A549 (cell line): ENCODE measurements at regions of chr21 and their contacts with region 1.

Region 1: GRCh38 chr21:33924079-33924765 is 8.6 kb upstream of the ATP5PO start:
- DNase-seq: peak; percentile 48 to 76
- ATAC-seq: peak; percentile 98
- H3K4me3 ChIP-seq: no peak overlapping the region
- H3K27ac ChIP-seq: peak overlapping the region; percentile 39 to 67; a peak in 3 of 6 replicates
- H3K4me1 ChIP-seq: peaks cover 5% of the 10 kb centered on the region; the same call in 1 of the 3 replicates
- CTCF ChIP-seq: peak; percentile 73
- EP300 ChIP-seq: no peak
- POLR2A ChIP-seq: no peak
- RAD21 ChIP-seq: peak; percentile 94

Region 2: DNA sequence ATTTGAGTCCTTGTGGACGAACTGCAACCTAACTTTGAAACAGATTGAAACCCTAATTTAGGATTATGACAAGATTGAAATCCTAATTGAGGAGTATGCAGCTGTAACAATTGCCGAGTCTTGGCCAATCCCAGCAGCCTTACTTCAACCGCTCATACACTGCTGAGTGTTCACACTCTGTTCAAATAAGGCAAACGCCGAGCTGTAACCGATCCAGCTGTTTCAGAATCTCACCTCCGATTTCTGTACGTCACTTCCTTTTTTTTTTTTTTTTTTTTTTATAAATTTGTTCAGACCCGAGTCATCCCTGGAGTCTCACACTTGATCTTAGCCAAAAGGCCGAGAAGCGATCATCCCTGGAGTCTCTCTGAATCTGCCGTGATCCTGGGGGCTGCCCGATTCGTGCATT is 13.7 kb after region 1 on chr21:
- CTCF ChIA-PET with region 1: interaction called, 42 read pairs
- POLR2A ChIA-PET with region 1: no interaction called
- DNase-seq: no peak
- ATAC-seq: no peak
- H3K4me3 ChIP-seq: no peak overlapping the region
- H3K27ac ChIP-seq: no peak overlapping the region
- H3K4me1 ChIP-seq: no peaks in the 10 kb centered on the region
- CTCF ChIP-seq: no peak
- EP300 ChIP-seq: no peak
- POLR2A ChIP-seq: no peak
- RAD21 ChIP-seq: no peak

Region 3: DNA sequence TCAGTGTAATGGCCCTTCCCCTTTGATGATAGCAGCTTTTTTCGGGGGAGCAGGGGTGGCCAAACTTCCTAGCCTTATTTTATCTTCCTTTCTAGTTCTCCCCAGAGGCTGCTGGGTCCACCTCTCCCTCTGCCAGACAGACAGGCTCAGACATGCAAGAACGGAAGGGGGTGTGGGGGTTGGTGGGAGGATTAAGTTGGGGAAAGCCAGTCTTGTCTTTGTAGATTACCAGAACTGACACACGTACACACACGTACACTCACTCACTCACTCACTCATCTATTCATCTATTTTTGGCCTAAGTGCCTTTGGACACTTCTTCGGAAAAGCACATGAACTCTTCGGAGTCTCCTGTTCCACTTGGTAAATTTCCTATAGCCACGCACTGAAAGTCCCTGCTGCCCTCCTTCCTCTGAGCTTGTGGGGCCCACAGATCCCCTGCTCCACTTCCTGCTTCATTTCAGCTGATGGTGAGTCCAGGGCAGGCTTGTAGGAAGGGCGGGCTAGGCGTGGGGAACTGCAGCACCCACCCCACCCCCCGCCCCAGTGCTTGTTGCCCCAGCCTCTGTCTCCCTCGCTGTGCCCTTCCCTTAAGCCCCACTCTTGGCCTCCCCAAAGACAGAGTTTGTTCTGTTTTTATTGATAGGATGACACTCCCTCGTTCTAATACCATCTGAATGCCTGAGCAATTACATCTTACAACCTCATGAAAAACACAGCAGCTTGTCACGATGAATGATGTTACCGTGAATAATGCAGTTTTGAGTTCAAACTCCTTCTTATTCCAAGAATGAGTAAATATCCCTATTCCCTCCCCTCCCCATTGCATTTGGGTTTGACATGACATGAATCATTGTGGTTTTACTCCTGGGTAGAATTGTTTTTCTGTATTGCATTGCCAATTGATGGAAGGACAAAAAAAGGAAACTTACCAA is 52.1 kb after region 1 on chr21:
- CTCF ChIA-PET with region 1: interaction called, 20 read pairs
- POLR2A ChIA-PET with region 1: no interaction called
- DNase-seq: peak; percentile 15 to 67
- ATAC-seq: peak; percentile 72 to 78
- H3K4me3 ChIP-seq: no peak overlapping the region
- H3K27ac ChIP-seq: peak overlapping the region; percentile 66 to 84
- H3K4me1 ChIP-seq: peaks cover 33% of the 10 kb centered on the region
- CTCF ChIP-seq: no peak
- EP300 ChIP-seq: no peak
- POLR2A ChIP-seq: no peak
- RAD21 ChIP-seq: no peak

Region 4: GRCh38 chr21:34073032-34073869 is 149.0 kb after region 1 on chr21 and contains the starts of genes MRPS6 and SLC5A3:
- CTCF ChIA-PET with region 1: interaction called, 20 read pairs
- POLR2A ChIA-PET with region 1: interaction called, 11 read pairs
- DNase-seq: peak; percentile 13 to 78
- ATAC-seq: peak; percentile 89 to 90
- H3K4me3 ChIP-seq: peak within 1 kb of the TSS; percentile 98
- H3K27ac ChIP-seq: peak within 1 kb of the TSS; percentile 94 to 100
- H3K4me1 ChIP-seq: peaks cover 21% of the 10 kb centered on the region
- CTCF ChIP-seq: no peak
- EP300 ChIP-seq: no peak
- POLR2A ChIP-seq: peak; percentile 97
- RAD21 ChIP-seq: no peak
- polyA plus RNA-seq, gene MRPS6: 23.2 and 26.9 TPM in 2 replicates
- polyA plus RNA-seq, gene SLC5A3: 6.5 and 7.2 TPM in 2 replicates

Region 5: DNA sequence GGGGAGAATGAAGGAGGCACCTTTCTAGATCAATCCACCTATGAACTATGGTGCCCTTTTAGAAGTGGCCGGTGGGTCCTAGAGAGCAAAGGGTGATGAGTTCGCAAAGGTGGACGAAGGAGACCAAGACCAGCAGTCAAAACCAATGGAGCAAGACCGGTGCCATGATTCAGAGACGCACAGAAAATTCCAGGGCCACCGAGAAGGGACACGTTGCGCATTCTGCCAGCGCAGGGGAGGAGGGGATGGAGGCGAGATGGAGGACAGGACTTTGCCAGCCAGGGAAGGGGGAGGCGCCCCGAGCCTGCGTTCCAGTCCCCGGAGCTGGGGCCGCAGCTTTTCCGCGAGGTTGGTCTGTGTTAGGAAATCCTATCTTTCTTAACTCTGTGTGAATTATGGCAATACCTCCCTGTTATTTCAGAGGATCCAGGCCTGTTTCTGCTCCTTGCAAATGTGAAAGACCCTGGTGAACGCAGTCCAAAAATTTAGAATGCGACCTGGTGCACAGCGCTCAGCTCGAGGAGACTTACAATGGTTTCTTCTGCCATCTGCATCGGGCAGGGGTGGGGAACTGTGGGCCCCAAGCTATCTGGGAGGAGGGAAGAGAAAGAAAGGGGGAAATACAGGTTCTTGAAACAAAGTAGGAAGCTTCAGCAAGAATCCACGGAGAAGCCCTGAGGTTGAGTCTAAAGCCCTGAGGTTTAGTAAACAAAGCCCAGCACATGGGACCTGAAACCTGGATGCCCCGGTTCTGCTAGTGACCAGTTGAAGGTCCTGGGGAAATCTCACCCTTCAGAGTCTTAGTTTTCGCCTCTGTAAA is 278.5 kb after region 1 on chr21:
- CTCF ChIA-PET with region 1: interaction called, 53 read pairs
- POLR2A ChIA-PET with region 1: no interaction called
- DNase-seq: peak in 1 of 2 experiments; percentile 14
- ATAC-seq: peak; percentile 40 to 44; a peak in 5 of 6 replicates
- H3K4me3 ChIP-seq: peak overlapping the region; percentile 46; the same call in 1 of the 3 replicates
- H3K27ac ChIP-seq: peak overlapping the region; percentile 71 to 95; a peak in 4 of 6 replicates
- H3K4me1 ChIP-seq: peaks cover 11% of the 10 kb centered on the region; the same call in 2 of the 3 replicates
- CTCF ChIP-seq: no peak
- EP300 ChIP-seq: no peak
- POLR2A ChIP-seq: no peak
- RAD21 ChIP-seq: no peak

Region 6: DNA sequence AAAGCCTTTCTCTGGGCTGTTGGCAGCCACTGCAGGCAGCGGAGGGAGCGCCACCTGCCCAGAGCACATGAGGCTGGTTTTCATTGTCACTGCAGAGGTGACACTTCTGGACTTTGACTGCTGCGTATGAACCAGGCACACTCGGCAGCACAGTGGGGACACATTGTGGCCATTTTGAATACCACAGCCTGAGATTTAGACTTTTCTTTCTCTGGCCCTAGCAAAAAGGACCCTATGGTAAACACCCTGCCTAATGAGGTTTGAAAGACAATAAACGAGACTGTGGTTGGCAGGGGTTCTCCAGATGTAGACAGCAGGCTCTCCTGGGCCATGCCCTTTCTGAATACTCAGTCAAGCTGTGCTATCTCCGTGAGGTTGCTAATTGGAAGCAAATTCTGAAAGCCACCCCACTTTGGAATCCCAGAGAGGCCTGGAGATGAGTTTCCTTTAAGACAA is 427.6 kb after region 1 on chr21:
- CTCF ChIA-PET with region 1: interaction called, 239 read pairs
- POLR2A ChIA-PET with region 1: interaction called, 7 read pairs
- DNase-seq: peak; percentile 21 to 34
- ATAC-seq: peak; percentile 74 to 81
- H3K4me3 ChIP-seq: no peak overlapping the region
- H3K27ac ChIP-seq: no peak overlapping the region
- H3K4me1 ChIP-seq: no peaks in the 10 kb centered on the region
- CTCF ChIP-seq: peak; percentile 28; the same call in 2 of the 3 replicates
- EP300 ChIP-seq: no peak
- POLR2A ChIP-seq: no peak
- RAD21 ChIP-seq: peak; percentile 61 to 62